AG04450 (cell line): ENCODE measurements at regions of chr19 and their contacts with region 1.

Region 1: GRCh38 chr19:8240274-8241229 is 31.4 kb downstream of the CERS4 start:
- DNase-seq: peak; percentile 91
- H3K4me3 ChIP-seq: peak overlapping the region; percentile 32
- H3K27ac ChIP-seq: peak overlapping the region; percentile 21
- H3K27me3 ChIP-seq: peaks cover 5% of the 10 kb centered on the region
- CTCF ChIP-seq: no peak

Region 2: DNA sequence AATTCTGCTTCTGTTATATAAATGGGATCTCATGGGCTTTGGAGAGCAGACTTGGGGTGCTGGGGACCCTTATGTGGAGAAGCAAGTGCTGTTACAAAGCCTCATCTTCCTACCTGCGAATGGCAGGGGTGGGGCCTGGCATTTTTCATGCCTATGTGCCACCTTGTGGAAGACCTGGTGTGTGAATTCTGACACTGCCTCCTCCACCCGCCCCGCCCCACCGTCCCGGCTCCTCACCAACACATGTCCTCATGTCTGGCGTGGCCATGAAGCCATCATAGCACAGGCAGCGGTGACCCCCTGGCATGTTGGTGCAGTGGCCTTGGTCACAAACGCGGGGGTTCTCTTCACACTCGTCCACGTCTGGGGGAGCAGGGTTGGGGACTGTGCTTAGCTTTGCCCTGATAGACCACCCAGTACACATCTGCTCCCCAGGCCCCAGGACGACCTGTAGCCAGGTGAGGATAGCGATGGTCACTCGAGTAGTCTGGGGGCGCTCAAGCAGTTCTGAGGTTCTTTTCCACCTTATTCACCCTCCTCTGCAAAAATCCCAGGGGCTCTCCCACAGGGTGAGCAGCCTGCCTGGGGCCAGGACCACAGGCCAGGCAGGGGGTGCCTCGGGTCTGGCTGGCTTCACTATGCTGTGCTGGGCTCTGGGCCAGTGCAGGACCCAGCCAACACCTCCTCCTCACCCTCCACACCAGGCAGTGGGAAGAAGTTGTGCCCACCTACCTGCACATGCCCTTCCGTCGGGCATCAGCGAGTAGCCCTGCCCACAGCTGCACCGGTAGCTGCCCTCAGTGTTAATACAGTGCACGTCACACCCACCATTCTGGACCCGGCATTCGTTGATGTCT is 123.9 kb before region 1 on chr19:
- CTCF ChIA-PET with region 1: no interaction called
- POLR2A ChIA-PET with region 1: interaction called, 12 read pairs
- DNase-seq: no peak
- H3K4me3 ChIP-seq: no peak overlapping the region
- H3K27ac ChIP-seq: no peak overlapping the region
- H3K27me3 ChIP-seq: no peaks in the 10 kb centered on the region
- CTCF ChIP-seq: no peak

Region 3: GRCh38 chr19:8697671-8698432 is 457.3 kb after region 1 on chr19:
- CTCF ChIA-PET with region 1: interaction called, 13 read pairs
- POLR2A ChIA-PET with region 1: no interaction called
- DNase-seq: no peak
- H3K4me3 ChIP-seq: no peak overlapping the region
- H3K27ac ChIP-seq: no peak overlapping the region
- H3K27me3 ChIP-seq: no peaks in the 10 kb centered on the region
- CTCF ChIP-seq: no peak